ENCODE measurements at regions of chr22 and their contacts with region 1.

Region 1: DNA sequence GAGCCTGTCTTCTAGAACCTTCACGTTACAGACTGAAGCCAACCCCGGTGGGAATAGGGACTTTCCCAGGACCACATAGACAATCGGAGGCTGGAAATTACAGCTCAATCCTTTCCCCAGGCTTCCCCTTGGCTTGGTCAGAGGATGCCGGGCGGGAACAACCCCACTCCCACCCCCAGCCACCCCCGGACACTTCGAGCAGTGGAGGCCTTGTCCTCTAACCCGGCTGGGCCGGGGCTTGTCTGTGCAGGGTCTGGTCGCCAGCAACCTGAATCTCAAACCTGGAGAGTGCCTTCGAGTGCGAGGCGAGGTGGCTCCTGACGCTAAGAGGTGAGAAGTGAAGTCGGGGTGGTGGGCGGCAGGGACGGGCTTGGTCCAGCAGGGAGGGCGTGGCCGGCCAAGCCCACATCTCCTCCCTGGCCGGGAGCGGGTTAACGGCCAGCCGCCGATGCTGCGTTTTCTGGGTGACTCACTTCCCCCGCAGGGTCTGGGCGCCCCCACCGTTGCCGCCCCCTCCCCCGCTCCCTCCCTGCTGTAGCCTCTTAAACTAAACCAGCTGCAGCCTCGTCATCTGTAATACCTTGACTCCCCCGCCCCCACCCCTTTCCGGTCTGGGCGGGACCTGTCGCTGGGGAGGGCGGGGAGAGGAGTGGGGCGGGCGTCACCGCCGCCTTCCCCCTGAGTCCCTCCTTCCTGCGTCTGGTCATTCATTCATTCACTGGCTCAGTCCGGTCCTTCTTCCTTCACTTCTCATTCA is 1.5 kb downstream of the LGALS1 start:
- DNase-seq: peak; percentile 77

Region 2: DNA sequence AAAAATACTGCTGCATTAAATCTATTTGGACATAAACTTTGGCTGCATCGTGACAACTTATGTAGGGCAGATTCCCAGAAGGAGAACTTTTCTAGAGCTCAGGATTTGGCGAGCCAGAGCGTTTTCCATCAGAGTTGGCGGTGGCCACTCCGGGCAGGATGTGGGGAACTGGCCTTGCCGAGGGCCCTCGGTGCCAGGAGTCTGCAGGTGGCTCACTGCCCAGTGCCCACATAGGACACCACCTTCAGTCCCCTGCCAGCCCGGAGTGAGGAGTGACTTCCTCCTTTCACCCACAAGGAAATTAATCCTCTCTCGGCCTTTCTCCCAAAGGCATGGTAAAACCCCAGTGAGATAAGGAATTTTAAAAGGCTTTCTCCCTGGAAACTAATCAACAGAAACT is 95.4 kb before region 1 on chr22:
- CTCF ChIA-PET with region 1: no interaction called
- POLR2A ChIA-PET with region 1: no interaction called
- DNase-seq: no peak

Region 3: GRCh38 chr22:37643225-37643847 is 33.6 kb before region 1 on chr22:
- CTCF ChIA-PET with region 1: interaction called, 24 read pairs
- POLR2A ChIA-PET with region 1: interaction called, 9 read pairs
- DNase-seq: peak; percentile 93